PC-9 (cell line): ENCODE measurements at regions of chr17 and their contacts with region 1.

Region 1: DNA sequence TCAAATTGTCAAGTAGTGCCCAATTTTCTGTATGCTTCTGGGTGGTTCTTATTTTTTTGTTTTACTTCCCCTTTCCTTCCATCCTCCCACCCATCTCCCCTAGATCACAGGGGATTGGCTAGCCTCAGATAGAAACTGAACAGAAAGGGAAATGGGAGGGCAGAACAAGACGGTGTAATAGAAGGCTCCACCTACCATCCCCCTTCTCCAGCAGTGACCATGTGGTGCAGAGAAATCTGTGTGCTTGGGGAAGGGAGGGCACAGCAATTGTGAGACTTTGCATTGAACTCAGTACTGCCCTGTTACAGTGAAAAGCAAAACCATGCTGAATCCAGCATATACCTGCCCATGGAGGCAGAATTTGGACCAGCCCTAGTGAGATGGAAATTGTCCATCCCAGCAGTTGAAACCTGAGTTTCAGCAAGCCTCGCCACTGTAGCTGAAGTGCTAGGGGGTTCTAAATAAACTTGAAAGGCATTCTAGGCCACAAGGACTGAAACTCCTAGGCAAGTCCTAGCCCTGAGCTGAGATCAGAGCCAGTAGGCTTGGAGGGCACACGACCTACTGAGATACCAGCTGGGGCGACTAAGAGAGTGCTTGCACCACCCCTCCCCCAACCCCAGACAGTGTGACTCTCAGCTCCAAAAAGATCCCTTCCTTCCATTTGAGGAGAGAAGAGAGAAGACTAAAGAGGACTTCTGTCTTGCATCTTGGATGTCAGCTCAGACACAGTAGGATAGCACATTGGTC is 5.2 kb downstream of the SLFN11 start:
- DNase-seq: no peak
- H3K4me3 ChIP-seq: no peak overlapping the region
- H3K27ac ChIP-seq: no peak overlapping the region
- H3K4me1 ChIP-seq: peaks cover 2% of the 10 kb centered on the region; the same call in 1 of the 2 replicates
- H3K27me3 ChIP-seq: peaks cover 60% of the 10 kb centered on the region
- CTCF ChIP-seq: no peak

Region 2: DNA sequence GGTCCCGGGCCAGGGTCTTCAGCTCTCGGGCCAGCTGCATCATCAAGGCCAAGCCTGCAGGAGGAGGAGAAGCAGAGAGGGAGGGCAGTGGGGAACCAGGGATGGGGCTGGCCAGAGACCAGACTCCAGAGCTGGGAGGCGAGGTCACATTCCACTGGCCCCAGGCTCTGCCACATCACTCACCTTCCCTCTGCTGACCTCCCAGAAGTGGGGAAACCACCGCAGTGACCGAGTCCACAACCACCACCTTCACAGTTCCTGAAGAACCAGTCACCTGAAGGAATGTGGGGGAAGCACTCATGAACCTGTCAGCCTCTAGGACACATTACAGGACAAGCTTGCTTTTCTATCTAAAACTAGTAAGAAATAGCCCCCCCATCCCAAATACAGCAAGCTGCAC is 265.0 kb before region 1 on chr17:
- CTCF ChIA-PET with region 1: no interaction called
- POLR2A ChIA-PET with region 1: interaction called, 15 read pairs
- intact Hi-C with region 1: no loop called
- DNase-seq: peak; percentile 63 to 74
- H3K4me3 ChIP-seq: no peak overlapping the region
- H3K27ac ChIP-seq: no peak overlapping the region
- H3K4me1 ChIP-seq: peaks cover 7% of the 10 kb centered on the region; the same call in 1 of the 2 replicates
- H3K27me3 ChIP-seq: no peaks in the 10 kb centered on the region
- CTCF ChIP-seq: no peak